ENCODE measurements at regions of chr6 and their contacts with region 1.

Region 1: DNA sequence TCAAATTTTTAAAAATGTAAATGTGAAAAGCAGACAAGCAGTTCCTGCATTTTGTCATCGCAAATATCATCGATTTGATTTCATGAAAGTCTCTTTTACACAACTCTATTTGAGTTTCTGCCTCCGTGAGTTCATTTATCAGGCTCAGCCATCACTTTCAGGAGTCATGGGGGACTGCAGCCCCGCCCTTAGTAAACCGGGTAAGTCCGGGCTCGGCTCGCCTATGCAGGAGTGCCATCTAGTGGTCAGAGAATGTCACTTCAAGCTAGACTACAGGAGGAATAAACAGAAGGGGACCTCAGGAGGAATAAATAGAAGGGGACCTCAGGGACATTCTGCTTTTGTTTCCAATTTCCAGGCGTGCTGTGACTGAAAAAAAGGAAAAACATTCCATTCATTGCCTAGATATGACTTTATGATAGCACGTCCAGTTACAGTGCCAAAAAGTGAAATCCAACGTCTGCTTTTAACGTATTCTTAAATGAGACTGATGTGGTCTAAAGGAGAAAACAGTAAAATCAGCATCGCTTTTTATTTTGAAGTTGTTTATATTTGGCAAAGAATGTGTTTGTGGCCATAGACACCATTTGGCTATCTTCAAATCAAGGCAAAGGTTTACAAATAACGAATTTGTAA is 333.9 kb downstream of the HACE1 start:
- DNase-seq: peak; percentile 73
- ATAC-seq: peak; percentile 88
- H3K4me3 ChIP-seq: peak overlapping the region in 2 of 5 experiments; percentile 16 to 43
- H3K4me3 Mint-ChIP-seq: peak overlapping the region; percentile 38
- H3K27ac ChIP-seq: no peak overlapping the region
- H3K27ac Mint-ChIP-seq: no peak overlapping the region
- H3K4me1 ChIP-seq: no peaks in the 10 kb centered on the region
- H3K4me1 Mint-ChIP-seq: no peaks in the 10 kb centered on the region
- H3K27me3 ChIP-seq: no peaks in the 10 kb centered on the region
- H3K27me3 Mint-ChIP-seq: no peaks in the 10 kb centered on the region
- CTCF ChIP-seq: peak; percentile 91

Region 2: GRCh38 chr6:104537180-104537579 is 11.4 kb after region 1 on chr6:
- CTCF ChIA-PET with region 1: interaction called, 13 read pairs
- POLR2A ChIA-PET with region 1: no interaction called
- intact Hi-C with region 1: no loop called
- DNase-seq: no peak
- ATAC-seq: no peak
- H3K4me3 ChIP-seq: no peak overlapping the region
- H3K4me3 Mint-ChIP-seq: no peak overlapping the region
- H3K27ac ChIP-seq: no peak overlapping the region
- H3K27ac Mint-ChIP-seq: no peak overlapping the region
- H3K4me1 ChIP-seq: no peaks in the 10 kb centered on the region
- H3K4me1 Mint-ChIP-seq: no peaks in the 10 kb centered on the region
- H3K27me3 ChIP-seq: no peaks in the 10 kb centered on the region
- H3K27me3 Mint-ChIP-seq: no peaks in the 10 kb centered on the region
- CTCF ChIP-seq: no peak